ENCODE measurements at regions of chr15 and their contacts with region 1.

Region 1: DNA sequence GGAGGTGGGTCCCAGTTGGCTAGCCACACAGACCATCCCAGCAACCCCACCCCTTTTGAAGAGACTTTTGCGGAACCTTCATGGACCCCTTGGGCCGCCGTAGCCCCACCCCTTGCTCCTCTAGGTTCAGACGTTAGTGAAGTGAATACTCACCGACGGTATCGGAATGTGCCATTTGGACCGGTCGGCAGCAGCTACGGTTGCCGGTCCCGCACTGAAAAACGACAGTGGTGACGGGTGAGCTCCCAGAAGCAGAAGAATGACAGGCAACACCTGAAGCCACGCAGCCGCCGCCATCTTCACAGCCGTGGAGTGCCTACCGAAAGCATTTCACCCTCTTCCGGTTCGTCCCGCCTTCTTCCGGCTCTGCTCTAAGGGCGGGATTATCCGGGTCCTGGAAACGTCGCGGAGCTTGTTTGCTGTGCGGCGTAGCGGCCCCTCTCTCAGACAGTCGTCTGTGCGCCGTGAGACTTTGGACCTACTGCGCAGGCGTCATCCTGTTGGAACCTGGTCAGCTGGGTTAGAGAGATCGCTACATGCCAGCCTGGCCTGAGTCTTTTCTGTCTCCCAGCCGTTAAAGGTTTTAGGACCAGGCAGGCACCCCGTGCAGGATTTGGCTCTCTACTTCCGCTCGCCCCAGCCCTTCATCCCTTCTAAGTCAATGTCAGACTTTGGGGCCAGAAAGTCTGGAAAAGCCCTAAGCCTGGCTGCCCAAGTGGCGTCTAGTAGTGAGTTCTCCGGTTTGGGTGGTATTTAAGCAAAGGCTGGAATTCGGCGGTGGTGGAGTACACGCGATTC is at the starts of genes GANC and TMEM87A:
- DNase-seq: peak; percentile 98
- H3K4me3 ChIP-seq: peak within 1 kb of the TSS; percentile 92
- H3K27ac ChIP-seq: peak within 1 kb of the TSS; percentile 98
- H3K27me3 ChIP-seq: no peaks in the 10 kb centered on the region
- CTCF ChIP-seq: no peak
- polyA plus RNA-seq, gene GANC: 14.6 and 16.5 TPM in 2 replicates
- polyA plus RNA-seq, gene TMEM87A: 27.2 and 37.4 TPM in 2 replicates

Region 2: DNA sequence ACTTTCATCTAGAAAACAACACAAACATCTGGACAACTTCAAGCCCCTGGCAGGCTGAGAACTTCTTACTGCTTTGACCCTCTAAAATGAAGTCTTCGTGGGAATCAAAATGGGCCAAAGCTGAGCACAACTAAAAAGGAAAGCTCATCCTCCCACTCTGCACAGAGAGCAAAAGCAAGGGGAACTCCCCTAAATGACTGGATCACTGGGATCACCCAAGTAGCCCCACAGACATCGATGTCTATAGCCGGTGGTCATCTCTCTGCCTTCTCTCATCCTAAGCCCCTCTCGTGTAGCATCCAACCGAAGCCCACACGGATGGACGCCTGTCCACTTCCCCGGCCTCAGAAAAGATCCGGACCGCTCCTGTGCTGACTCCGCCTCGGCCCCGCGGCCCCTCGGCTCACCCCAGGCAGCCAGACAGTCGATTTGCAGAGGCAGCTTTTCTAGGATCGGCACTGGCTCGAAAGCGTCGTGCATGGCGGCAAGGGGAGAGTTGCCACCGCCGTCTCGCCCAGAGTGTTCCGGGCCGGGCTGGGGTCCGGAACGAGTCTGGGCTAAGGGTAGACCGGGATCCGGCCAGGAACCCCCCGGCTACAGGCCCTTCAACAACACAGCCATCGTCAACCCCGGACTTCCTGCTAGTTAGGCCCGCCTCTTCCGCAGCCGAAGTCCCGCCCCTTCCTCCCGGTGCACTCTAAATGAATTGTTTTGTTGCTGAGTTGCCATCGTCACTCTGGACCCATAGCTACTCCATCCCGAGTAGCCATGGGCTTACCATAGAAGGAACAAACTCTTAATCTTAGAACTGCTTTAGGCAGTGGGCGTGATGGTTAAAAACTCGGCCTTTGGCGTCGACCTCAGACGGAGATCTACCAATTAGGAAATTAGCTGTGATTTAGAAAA is 65.4 kb before region 1 on chr15 and contains the start of gene VPS39:
- CTCF ChIA-PET with region 1: interaction called, 3 read pairs
- POLR2A ChIA-PET with region 1: interaction called, 10 read pairs
- DNase-seq: peak; percentile 47
- H3K4me3 ChIP-seq: peak within 1 kb of the TSS; percentile 91
- H3K27ac ChIP-seq: peak within 1 kb of the TSS; percentile 69
- H3K27me3 ChIP-seq: no peaks in the 10 kb centered on the region
- CTCF ChIP-seq: no peak
- polyA plus RNA-seq, gene VPS39: 67.3 and 69.0 TPM in 2 replicates

Region 3: DNA sequence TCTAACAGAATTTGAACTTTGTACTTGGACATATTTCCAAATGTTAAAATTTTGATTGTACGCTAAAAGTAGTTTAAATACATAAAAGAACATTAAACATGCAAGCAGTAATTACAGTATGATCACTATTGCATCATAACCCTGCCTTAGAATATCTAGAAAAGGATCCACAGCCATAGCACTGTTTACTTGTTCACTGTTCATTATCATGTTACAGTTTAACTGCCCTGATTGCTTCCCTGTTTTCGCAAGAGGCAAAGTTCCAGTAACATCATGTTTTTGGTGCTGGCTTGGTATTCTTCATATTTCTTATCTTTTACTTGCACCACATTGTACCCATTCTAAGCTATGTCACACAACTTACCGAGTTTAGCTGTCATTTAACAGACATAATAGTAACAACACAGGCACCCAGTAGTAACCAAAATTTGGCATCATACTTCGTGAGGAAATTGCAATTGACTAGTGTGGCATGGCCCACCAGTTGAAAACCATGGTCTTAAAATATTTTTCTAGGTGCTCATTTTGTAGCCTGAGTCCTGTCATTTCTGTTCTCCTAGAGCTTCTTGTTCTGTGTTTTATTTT is 13.2 kb after region 1 on chr15:
- CTCF ChIA-PET with region 1: interaction called, 3 read pairs
- POLR2A ChIA-PET with region 1: interaction called, 10 read pairs
- DNase-seq: no peak
- H3K4me3 ChIP-seq: no peak overlapping the region
- H3K27ac ChIP-seq: no peak overlapping the region
- H3K27me3 ChIP-seq: no peaks in the 10 kb centered on the region
- CTCF ChIP-seq: no peak

Region 4: DNA sequence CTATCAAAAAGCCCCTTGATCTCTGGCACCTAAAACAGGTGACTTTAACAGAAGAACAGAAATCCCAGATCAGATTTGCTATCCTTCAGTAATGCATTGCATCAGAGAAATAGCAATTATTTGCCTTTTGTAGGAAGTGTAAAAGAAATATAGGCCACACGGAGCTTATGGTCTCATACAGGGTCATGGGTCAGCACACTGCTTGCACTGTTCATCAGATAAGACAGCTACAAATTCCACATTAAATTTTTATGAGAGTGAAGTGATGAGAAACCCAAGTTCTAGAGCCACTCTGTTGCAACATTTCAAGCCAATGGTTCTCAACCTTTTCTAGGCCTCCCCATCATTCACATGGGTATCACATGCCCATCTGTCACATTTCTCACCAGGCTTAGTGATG is 33.4 kb after region 1 on chr15:
- CTCF ChIA-PET with region 1: no interaction called
- POLR2A ChIA-PET with region 1: no interaction called
- DNase-seq: no peak
- H3K4me3 ChIP-seq: no peak overlapping the region
- H3K27ac ChIP-seq: no peak overlapping the region
- H3K27me3 ChIP-seq: no peaks in the 10 kb centered on the region
- CTCF ChIP-seq: no peak

Measured in AG04450 (cell line).